ENCODE measurements at regions of chr16 and their contacts with region 1.

Region 1: GRCh38 chr16:8567750-8568617 is 22.3 kb downstream of the TMEM114 start:
- DNase-seq: peak; percentile 88
- H3K4me3 ChIP-seq: no peak overlapping the region
- CTCF ChIP-seq: peak; percentile 99

Region 2: GRCh38 chr16:8481810-8482209 is 86.2 kb before region 1 on chr16:
- in situ Hi-C with region 1: no loop called
- DNase-seq: no peak
- H3K4me3 ChIP-seq: no peak overlapping the region
- CTCF ChIP-seq: no peak

Region 3: DNA sequence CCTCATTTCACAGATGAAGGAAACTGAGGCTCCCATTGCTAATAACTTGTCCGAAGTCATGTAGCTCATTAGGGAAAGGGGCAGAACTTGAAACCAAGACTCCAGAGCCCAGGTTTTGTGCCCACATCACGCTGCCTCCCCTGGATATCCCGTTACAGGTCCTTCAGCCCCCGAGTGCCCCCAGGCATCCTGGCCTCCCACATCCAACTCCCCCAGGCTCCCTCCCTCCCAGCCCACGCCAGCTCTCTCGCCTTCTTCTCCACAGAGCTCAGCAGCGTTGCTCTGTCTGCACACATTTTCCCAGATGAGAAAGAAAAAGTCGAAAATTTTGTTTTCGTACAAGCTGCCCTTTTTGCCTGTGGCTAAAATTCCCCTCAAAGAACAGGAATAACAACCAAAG is 39.2 kb after region 1 on chr16:
- in situ Hi-C with region 1: loop called (anchors 5 kb)
- DNase-seq: no peak
- H3K4me3 ChIP-seq: no peak overlapping the region
- CTCF ChIP-seq: no peak

Region 4: GRCh38 chr16:8634991-8635736 is 67.2 kb after region 1 on chr16:
- in situ Hi-C with region 1: loop called (anchors 5 kb)
- DNase-seq: no peak
- H3K4me3 ChIP-seq: no peak overlapping the region
- CTCF ChIP-seq: peak; percentile 90

Measured in astrocyte of the cerebellum (primary cell).